ENCODE measurements at regions of chr22 and their contacts with region 1.

Region 1: DNA sequence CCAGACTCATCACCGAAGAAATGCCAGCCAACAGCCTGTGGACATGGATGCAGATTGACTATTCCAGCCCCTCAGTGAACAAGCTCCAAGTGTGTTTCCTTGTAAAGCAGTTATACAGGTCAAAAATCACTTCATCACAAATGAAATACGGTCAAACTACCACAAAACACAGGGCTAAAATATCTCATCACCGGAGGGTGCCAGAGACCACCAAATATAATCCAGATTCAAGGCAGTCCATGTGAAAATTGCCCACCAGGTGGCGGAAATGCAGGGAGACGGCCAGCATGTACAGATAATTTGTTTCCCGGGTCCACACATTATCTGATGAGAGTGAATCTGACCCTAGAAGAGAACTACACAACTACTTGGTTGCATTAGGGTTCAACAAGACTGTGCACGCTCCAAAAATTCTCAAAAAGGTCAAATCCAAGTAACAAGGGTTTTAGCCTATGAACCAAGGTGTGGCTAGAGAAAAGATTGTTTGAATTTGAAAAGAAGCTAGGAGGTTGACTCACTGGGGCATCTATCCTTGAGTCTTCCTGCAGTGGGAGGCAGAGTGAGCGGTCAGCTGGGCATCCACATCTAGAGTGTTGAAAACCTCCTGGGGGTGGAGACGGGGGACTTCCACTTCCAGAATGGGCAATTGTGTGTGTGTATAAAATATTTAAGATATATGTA is 71.7 kb downstream of the IGLL5 start:
- DNase-seq: peak; percentile 90
- ATAC-seq: peak; percentile 52
- H3K4me3 ChIP-seq: no peak overlapping the region
- H3K4me3 Mint-ChIP-seq: no peak overlapping the region
- H3K27ac ChIP-seq: no peak overlapping the region
- H3K27ac Mint-ChIP-seq: peak overlapping the region; percentile 43
- H3K4me1 ChIP-seq: peaks cover 11 to 18% of the 10 kb centered on the region in 2 donors
- H3K4me1 Mint-ChIP-seq: peaks cover 15% of the 10 kb centered on the region
- H3K27me3 ChIP-seq: no peaks in the 10 kb centered on the region
- H3K27me3 Mint-ChIP-seq: no peaks in the 10 kb centered on the region
- CTCF ChIP-seq: peak; percentile 95

Region 2: GRCh38 chr22:22380098-22381030 is 578.9 kb before region 1 on chr22:
- CTCF ChIA-PET with region 1: interaction called, 33 read pairs
- POLR2A ChIA-PET with region 1: no interaction called
- intact Hi-C with region 1: no loop called
- DNase-seq: peak; percentile 87
- ATAC-seq: peak; percentile 88
- H3K4me3 ChIP-seq: peak overlapping the region in 1 of 5 experiments; percentile 15
- H3K4me3 Mint-ChIP-seq: peak overlapping the region; percentile 77
- H3K27ac ChIP-seq: peak overlapping the region; percentile 60 to 72
- H3K27ac Mint-ChIP-seq: peak overlapping the region; percentile 94
- H3K4me1 ChIP-seq: peaks cover 59 to 69% of the 10 kb centered on the region in 2 donors
- H3K4me1 Mint-ChIP-seq: peaks cover 79% of the 10 kb centered on the region
- H3K27me3 ChIP-seq: no peaks in the 10 kb centered on the region
- H3K27me3 Mint-ChIP-seq: no peaks in the 10 kb centered on the region
- CTCF ChIP-seq: peak; percentile 66

Region 3: DNA sequence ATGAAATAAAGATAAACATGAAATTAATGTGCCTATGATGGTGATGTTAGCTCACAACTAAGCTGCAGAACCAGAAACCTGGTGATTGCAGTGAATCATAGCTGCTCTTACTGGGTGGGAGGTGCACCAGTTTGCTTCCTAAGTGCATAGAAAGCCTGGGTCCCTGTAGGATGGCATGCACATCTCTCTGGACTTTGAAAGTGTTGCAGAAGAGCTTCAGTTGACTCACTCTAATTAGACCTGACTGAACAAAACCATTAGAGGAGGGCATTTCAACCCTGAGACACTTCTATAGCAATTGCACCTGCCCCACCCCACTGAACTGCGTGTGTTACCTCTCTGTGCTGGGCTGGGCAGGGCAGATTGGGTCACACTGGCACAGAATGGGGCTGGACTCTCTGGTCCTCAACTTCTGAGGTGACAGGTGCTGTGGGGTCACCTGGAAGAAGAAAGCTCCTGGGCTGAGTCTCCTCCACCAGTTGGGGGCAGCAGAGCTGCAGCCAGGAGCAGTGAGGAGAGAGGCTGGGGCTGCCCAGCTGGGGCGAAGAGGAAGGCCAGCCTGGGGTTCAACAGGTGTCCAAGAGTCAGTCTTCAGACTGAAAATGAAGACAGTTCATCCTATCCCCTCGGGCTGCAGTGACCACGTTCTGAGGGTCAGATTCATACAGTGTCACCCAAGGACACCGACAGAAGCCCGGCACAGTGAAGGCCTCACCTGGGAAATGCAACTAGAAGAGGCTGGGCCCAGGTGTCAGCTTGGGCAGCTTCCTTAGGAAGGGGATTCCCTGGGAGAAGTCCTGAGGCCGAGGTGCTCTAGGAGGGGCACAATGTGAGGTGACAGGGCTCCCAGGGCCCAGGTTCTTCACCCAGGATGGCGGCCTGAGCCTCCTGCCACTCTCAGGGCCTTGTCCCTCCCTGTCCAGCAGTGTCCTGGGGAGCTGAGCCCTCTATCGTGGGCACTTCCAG is 256.8 kb before region 1 on chr22:
- CTCF ChIA-PET with region 1: interaction called, 27 read pairs
- POLR2A ChIA-PET with region 1: interaction called, 5 read pairs
- intact Hi-C with region 1: no loop called
- DNase-seq: peak; percentile 36
- ATAC-seq: no peak
- H3K4me3 ChIP-seq: no peak overlapping the region
- H3K4me3 Mint-ChIP-seq: no peak overlapping the region
- H3K27ac ChIP-seq: no peak overlapping the region
- H3K27ac Mint-ChIP-seq: no peak overlapping the region
- H3K4me1 ChIP-seq: peaks cover 11 to 17% of the 10 kb centered on the region in 2 donors
- H3K4me1 Mint-ChIP-seq: peaks cover 21% of the 10 kb centered on the region
- H3K27me3 ChIP-seq: no peaks in the 10 kb centered on the region
- H3K27me3 Mint-ChIP-seq: peaks cover 3% of the 10 kb centered on the region
- CTCF ChIP-seq: peak; percentile 30

Region 4: GRCh38 chr22:22787786-22788459 is 171.4 kb before region 1 on chr22:
- CTCF ChIA-PET with region 1: interaction called, 139 read pairs
- POLR2A ChIA-PET with region 1: no interaction called
- intact Hi-C with region 1: loop called (anchors 1 kb)
- DNase-seq: peak; percentile 76
- ATAC-seq: peak; percentile 84
- H3K4me3 ChIP-seq: no peak overlapping the region
- H3K4me3 Mint-ChIP-seq: no peak overlapping the region
- H3K27ac ChIP-seq: no peak overlapping the region
- H3K27ac Mint-ChIP-seq: no peak overlapping the region
- H3K4me1 ChIP-seq: peaks cover 0 to 3% of the 10 kb centered on the region in 2 donors
- H3K4me1 Mint-ChIP-seq: no peaks in the 10 kb centered on the region
- H3K27me3 ChIP-seq: peaks cover 0 to 3% (median 0%) of the 10 kb centered on the region in 4 experiments
- H3K27me3 Mint-ChIP-seq: peaks cover 12% of the 10 kb centered on the region
- CTCF ChIP-seq: peak; percentile 81

Region 5: DNA sequence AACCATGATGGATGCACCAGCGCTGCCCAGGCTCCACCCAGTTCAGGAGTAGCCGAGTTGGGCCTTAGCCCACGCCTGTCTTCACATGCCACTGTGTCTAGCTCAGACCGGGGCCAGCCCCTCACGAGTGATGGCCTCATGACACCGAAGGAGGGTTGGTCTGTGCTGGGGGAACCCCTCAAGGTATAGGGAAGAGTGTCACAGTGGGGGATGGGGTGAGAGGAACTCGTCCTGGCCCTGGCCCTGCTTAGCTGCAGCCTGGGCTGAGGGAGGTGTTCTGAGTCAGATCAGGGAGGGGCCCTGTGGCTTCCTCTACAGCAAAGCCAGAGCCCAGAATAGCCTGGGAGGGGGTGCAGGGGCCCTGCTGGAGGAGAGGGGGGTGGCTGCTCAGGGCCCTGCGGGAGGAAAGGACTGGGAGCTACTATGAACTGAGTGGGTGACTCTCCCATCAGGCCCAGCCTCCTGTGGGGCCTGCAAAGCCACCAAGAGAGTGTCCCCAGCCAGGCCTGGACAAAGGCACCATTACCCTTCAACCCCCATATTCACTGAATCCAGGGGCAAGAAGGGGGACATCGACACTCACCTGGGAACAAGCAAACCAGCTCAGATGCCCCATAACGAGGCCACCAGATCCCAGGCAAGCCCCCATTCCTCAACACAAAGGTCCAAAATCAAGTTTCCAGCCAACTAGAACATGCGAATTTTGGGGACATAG is 30.5 kb before region 1 on chr22:
- CTCF ChIA-PET with region 1: interaction called, 117 read pairs
- POLR2A ChIA-PET with region 1: no interaction called
- intact Hi-C with region 1: loop called (anchors 2 kb)
- DNase-seq: peak; percentile 97
- ATAC-seq: peak; percentile 90
- H3K4me3 ChIP-seq: peak overlapping the region in 2 of 5 experiments; percentile 3 to 44
- H3K4me3 Mint-ChIP-seq: peak overlapping the region; percentile 79
- H3K27ac ChIP-seq: peak overlapping the region; percentile 94 to 99
- H3K27ac Mint-ChIP-seq: peak overlapping the region; percentile 95
- H3K4me1 ChIP-seq: peaks cover 98 to 100% of the 10 kb centered on the region in 2 donors
- H3K4me1 Mint-ChIP-seq: peaks cover 98% of the 10 kb centered on the region
- H3K27me3 ChIP-seq: no peaks in the 10 kb centered on the region
- H3K27me3 Mint-ChIP-seq: no peaks in the 10 kb centered on the region
- CTCF ChIP-seq: no peak

Region 6: DNA sequence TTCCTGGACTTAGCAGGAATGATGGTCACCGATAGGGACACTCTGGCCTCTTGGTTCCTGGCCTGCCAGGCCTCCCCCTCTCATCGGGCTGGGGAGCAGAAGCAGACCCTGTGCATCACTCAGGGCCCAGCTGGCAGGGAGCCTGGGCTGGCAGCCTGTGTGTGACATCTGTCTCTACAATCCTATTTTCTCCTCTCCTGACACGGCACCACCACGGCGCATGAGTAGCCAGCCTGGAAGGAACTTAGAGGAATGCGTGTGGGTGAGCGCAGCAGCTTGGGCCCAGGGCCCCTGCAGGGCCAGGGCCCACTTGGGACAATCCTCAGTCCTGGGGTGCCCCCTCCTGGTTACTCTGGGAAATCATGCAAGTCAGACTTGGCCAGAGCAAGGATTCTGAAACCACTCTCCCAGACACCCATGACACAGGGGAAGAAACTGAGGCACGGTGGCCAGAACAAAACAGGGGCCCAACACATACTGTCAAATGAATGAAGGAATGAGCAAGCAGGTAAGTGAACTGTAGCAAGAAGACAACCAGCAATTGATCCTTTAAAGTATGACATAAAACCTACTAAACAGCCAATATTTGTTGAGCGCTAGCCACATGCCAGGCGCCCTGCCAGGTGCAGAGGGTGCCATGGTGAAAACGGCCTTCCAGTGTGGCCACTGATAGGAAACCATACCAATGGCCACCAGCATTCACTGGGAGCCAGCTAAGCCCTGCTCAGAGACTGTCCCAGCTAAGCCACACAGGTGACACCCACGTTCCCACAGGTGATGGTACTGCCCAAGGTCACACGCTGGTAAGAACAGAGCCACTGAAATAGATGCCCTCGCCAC is 169.2 kb after region 1 on chr22:
- CTCF ChIA-PET with region 1: interaction called, 556 read pairs
- POLR2A ChIA-PET with region 1: interaction called, 4 read pairs
- intact Hi-C with region 1: loop called (anchors 1 kb)
- DNase-seq: peak; percentile 84
- ATAC-seq: peak; percentile 94
- H3K4me3 ChIP-seq: no peak overlapping the region
- H3K4me3 Mint-ChIP-seq: no peak overlapping the region
- H3K27ac ChIP-seq: no peak overlapping the region
- H3K27ac Mint-ChIP-seq: peak overlapping the region; percentile 18
- H3K4me1 ChIP-seq: no peaks in the 10 kb centered on the region
- H3K4me1 Mint-ChIP-seq: peaks cover 4% of the 10 kb centered on the region
- H3K27me3 ChIP-seq: no peaks in the 10 kb centered on the region
- H3K27me3 Mint-ChIP-seq: no peaks in the 10 kb centered on the region
- CTCF ChIP-seq: peak; percentile 90